Gastrocnemius medialis (tissue), 4 donors: ENCODE measurements at regions of chr3 and their contacts with region 1.

Region 1: DNA sequence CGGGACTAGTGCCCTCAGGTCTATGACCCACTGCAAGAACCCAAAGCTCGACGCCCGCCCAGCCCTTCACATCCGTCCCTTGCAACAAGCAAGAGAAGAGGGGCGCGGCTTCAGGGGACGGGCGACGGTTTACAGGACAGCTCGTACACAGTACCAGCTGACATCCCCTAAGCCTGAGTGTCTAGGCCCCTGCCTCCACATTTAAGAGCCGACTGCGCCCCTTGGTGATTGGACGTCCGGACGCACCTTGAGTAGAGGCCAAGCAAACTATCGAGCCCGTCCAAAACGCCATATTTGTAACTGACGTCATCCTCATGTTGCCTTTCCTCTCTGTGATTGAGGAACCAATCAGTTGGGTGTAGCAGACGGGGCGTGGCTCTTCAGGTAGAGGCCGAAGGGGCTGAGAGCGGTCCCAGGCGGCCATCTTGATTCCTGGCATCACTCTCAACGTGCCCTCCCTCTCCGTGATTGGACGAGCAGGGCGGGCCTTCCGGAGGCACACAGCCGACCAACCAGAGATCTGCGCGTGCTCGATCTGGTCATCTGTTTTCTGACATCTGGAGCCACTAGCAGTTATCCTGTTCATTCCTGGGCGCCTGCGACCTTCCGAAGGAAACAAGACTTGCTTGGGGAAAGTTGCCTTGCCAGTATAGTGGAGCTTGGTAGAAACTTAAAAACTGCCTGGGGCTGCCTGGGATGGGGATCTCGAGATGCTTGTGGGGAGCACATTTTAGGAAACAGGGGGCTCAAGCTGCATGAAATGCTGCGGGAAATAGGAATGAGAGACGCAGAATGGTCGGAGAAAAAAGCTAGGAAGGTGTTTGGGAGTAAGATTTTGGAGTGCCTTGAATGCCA is 4.0 kb upstream of the RPL14 start:
- DNase-seq: peak; percentile 99
- ATAC-seq: peak; percentile 92 to 94
- H3K4me3 ChIP-seq: peak overlapping the region; percentile 68 to 91 (median 80)
- H3K27ac ChIP-seq: peak overlapping the region; percentile 88 to 98 (median 94)
- H3K4me1 ChIP-seq: peaks cover 25 to 27% of the 10 kb centered on the region in 2 donors
- H3K27me3 ChIP-seq: no peaks in the 10 kb centered on the region
- CTCF ChIP-seq: no peak
- POLR2A ChIP-seq: peak; percentile 78 to 85

Region 2: DNA sequence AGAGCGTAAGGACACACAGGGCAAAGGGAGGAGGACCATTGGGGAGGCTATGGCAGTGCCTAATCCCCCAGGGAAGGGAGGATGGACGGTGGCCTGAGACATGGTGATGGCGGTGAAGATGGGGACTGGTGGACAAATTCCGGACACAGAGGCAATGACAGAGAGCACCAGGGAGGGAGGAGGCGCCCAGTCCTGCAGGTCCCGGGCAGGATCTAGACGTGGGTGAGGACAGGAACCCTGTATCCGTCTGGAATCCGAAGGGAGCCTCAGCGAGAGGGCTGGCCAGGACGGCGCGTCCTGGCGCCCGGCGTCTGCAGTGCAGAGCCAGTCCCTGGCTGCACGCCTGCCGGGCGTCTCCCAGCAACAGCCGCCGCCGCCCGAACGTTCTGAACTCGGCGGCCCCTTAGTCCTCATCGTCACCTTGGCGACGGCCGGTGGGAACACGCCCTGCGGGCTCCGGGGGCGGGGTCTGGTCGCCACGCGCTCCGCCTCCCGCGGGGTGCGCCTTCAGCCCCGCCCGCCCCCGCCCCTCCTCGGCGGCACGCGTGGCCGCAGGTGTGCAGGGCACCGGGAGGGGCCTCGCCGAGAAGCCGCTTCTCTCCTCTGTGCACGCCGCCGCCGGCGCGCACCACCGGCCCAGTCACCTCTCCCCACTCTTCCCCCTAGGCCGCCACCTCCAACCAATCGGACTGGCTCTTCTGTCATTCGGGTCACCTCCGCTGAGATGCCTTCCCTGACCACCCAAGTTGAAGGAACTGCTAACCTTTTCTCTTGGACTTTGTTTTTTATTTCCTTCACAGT is 1272.4 kb before region 1 on chr3:
- in situ Hi-C with region 1: loop called in 1 of 4 experiments (anchors 25 kb)
- intact Hi-C with region 1: no loop called
- DNase-seq: peak; percentile 85 to 93
- ATAC-seq: peak; percentile 68 to 70
- H3K4me3 ChIP-seq: peak overlapping the region; percentile 44 to 55 (median 47)
- H3K27ac ChIP-seq: peak overlapping the region; percentile 86 to 100 (median 94)
- H3K4me1 ChIP-seq: peaks cover 47 to 56% of the 10 kb centered on the region in 2 donors
- H3K27me3 ChIP-seq: no peaks in the 10 kb centered on the region
- CTCF ChIP-seq: peak; percentile 12 to 45 (median 31)
- POLR2A ChIP-seq: peak; percentile 47 to 57

Region 3: GRCh38 chr3:39406368-39407258 is 1046.5 kb before region 1 on chr3 and contains the start of gene RPSA:
- in situ Hi-C with region 1: no loop called
- intact Hi-C with region 1: loop called (anchors 5 kb)
- DNase-seq: peak; percentile 93 to 94
- ATAC-seq: peak; percentile 99 to 100
- H3K4me3 ChIP-seq: peak within 1 kb of the TSS; percentile 75 to 87 (median 83)
- H3K27ac ChIP-seq: peak within 1 kb of the TSS; percentile 83 to 96 (median 88)
- H3K4me1 ChIP-seq: peaks cover 17 to 23% of the 10 kb centered on the region in 2 donors
- H3K27me3 ChIP-seq: no peaks in the 10 kb centered on the region
- CTCF ChIP-seq: peak in 4 of 5 experiments; percentile 44 to 54 (median 54)
- POLR2A ChIP-seq: peak; percentile 95 to 97
- total RNA-seq, gene RPSA: 644 to 857 (median 730) TPM

Region 4: GRCh38 chr3:40317061-40317855 is 135.8 kb before region 1 on chr3:
- in situ Hi-C with region 1: loop called in 2 of 4 experiments (anchors 5 to 10 kb)
- intact Hi-C with region 1: no loop called
- DNase-seq: no peak
- ATAC-seq: peak; percentile 37 to 49
- H3K4me3 ChIP-seq: no peak overlapping the region
- H3K27ac ChIP-seq: no peak overlapping the region
- H3K4me1 ChIP-seq: peaks cover 21 to 23% of the 10 kb centered on the region in 2 donors
- H3K27me3 ChIP-seq: no peaks in the 10 kb centered on the region
- CTCF ChIP-seq: peak; percentile 68 to 82 (median 75)
- POLR2A ChIP-seq: no peak

Region 5: GRCh38 chr3:40476478-40477470 is 23.7 kb after region 1 on chr3 and contains the start of gene ZNF619:
- in situ Hi-C with region 1: no loop called
- intact Hi-C with region 1: loop called (anchors 1 kb)
- DNase-seq: peak; percentile 52 to 76
- ATAC-seq: peak; percentile 91 to 95
- H3K4me3 ChIP-seq: peak within 1 kb of the TSS; percentile 72 to 98 (median 88)
- H3K27ac ChIP-seq: peak within 1 kb of the TSS; percentile 77 to 90 (median 80)
- H3K4me1 ChIP-seq: peaks cover 4 to 6% of the 10 kb centered on the region in 2 donors
- H3K27me3 ChIP-seq: no peaks in the 10 kb centered on the region
- CTCF ChIP-seq: no peak
- POLR2A ChIP-seq: peak in 1 of 2 donors; percentile 17
- total RNA-seq, gene ZNF619: 1.9 to 7.2 (median 2.7) TPM

Region 6: DNA sequence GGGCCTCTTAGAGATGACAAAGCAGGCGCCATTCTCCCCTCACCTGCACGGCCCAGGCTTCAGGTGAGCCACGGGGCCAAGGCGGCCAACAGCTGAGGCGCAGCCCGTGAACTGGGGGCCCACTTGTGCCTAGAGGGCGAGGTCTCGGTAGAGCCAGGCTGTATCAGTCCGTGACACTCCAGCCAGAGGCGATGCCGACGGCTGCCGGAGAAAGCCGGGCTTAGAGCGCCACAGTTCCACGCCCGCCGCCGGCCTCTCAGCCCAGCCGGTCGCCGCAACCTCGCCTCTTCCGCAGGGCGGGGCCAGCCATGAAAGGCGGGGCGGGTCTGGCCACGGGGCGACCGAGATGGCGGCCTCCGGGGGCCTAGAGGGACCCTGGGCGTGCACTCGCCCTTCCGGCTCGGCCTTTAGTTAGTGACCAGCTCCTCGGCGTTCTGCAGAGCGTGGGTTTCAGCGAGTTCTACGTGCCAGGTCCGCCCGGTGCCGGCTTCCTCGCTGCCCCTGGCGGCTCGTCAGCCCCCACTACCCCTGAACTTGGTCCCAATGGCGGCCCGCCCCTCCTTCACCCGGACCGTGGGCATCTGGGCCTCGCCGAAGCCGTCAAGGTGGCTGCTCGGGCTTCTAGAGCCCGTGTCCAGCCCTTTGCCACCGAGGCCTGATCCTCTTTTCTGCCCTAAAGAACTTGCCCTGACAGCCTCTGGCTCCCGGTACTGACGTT is 71.6 kb after region 1 on chr3 and contains the start of gene ZNF621:
- in situ Hi-C with region 1: loop called in 1 of 4 experiments (anchors 10 kb)
- intact Hi-C with region 1: loop called (anchors 1 kb)
- DNase-seq: peak; percentile 78 to 87
- ATAC-seq: peak; percentile 95 to 96
- H3K4me3 ChIP-seq: peak within 1 kb of the TSS; percentile 67 to 96 (median 70)
- H3K27ac ChIP-seq: peak within 1 kb of the TSS; percentile 87 to 90 (median 88)
- H3K4me1 ChIP-seq: peaks cover 12 to 13% of the 10 kb centered on the region in 2 donors
- H3K27me3 ChIP-seq: no peaks in the 10 kb centered on the region
- CTCF ChIP-seq: peak in 1 of 5 experiments; percentile 11
- POLR2A ChIP-seq: peak; percentile 79 to 90
- total RNA-seq, gene ZNF621: 5.7 to 8.4 (median 7.4) TPM

Region 7: DNA sequence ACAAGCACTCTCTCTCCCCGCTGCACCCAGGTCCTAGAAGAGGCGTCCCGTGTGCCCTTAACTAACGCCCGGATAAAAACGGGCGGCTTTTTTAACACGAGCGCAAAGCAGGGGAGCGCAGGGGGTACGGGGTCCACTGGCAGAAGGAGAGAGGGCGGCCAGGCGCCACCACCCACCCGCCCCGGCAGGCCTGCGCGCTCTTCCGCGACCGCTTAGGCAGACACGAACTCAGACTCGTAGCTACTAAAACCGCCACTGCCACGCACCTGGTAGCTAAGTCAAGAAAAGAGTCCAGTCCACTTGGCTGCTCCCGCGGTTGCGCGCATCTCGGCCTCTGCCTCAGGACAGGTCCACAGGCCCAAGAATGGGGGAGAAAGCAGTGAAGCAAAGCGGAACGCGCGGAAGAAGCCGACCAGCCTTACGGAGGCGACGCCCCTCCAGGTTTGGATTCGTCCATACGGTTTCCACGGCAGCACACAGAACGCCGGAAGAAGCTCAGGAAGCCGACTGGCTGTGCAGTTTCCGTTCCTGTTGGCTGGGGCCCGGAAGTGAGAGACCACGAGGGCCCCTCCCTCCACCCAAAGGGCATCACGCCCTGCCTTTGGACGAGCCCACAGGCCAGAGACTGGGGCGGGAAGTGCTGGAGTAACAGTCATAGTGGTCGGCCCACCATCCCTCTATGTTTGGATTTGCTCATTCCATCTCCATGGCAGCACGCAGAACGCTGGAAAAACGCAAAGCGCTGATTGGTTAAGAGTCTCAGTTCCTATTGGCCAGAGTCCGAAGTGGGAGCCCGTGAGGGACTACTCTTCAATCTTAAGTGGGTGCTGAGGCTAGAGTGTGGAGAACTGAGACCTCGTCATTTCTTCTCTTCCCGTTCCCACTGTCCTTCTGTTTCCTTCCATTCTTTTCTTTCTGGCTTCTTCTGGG is 1508.9 kb after region 1 on chr3 and contains the start of gene ULK4:
- in situ Hi-C with region 1: no loop called
- intact Hi-C with region 1: loop called (anchors 1 kb)
- DNase-seq: peak; percentile 96
- ATAC-seq: peak; percentile 98 to 99
- H3K4me3 ChIP-seq: peak within 1 kb of the TSS; percentile 71 to 95 (median 84)
- H3K27ac ChIP-seq: peak within 1 kb of the TSS; percentile 49 to 79 (median 74)
- H3K4me1 ChIP-seq: peaks cover 0 to 9% of the 10 kb centered on the region in 2 donors
- H3K27me3 ChIP-seq: no peaks in the 10 kb centered on the region
- CTCF ChIP-seq: no peak
- POLR2A ChIP-seq: peak in 1 of 2 donors; percentile 14
- total RNA-seq, gene ULK4: 2.0 to 3.0 (median 2.3) TPM